ENCODE measurements at regions of chr2 and their contacts with region 1.

Region 1: GRCh38 chr2:25714740-25715139 is 41.4 kb upstream of the DTNB start:
- DNase-seq: peak; percentile 23

Region 2: GRCh38 chr2:25088817-25089516 is 625.8 kb before region 1 on chr2:
- CTCF ChIA-PET with region 1: interaction called, 10 read pairs
- POLR2A ChIA-PET with region 1: no interaction called
- DNase-seq: no peak

Region 3: GRCh38 chr2:25772078-25772477 is 57.3 kb after region 1 on chr2:
- CTCF ChIA-PET with region 1: no interaction called
- POLR2A ChIA-PET with region 1: no interaction called
- DNase-seq: no peak

Region 4: GRCh38 chr2:25948437-25948836 is 233.7 kb after region 1 on chr2:
- CTCF ChIA-PET with region 1: no interaction called
- POLR2A ChIA-PET with region 1: no interaction called
- DNase-seq: no peak

Measured in HEK293T (cell line).